ENCODE measurements at regions of chr14 and their contacts with region 1.

Region 1: DNA sequence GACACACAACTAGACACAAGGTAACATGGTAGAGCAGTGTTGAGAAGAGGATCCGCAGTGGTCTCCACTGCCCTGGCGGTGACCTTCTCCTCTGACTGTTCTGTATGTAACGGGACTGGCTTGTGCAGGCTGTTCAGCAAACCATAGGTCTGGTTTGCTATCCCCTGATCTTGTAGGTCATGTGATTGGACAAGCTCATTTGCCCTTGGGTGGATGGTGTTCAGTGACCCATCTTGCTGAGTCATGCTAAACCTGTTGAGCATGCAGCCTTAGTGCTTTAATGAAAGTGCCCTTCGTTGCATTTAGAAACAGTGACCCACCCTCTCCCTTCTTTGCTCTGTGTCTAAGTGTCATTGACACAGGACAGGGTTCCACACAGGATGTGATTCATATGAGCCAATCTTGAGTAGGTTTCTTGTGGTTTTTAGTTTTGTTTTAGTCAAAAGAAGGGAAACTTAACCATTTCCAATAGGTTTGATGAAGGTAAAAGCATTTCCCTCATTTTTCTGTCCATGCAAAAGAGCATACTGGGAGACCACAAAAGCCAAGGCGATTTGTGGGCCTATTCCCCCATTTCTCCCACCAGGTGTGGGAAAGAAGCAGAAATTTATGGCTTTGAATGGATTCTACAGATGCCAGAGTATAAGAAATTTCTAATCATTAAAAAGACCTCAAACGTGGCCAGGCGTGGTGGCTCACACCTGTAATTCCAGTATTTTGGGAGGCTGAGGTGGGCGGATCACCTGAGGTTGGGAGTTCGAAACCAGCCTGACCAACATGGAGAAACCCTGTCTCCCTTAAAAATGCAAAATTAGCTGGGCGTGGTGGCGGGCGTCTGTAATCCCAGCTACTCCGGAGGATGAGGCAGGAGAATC is 32.6 kb upstream of the HIF1A start:
- DNase-seq: peak; percentile 100
- ATAC-seq: peak; percentile 87
- H3K4me3 ChIP-seq: peak overlapping the region; percentile 50
- H3K27ac ChIP-seq: peak overlapping the region; percentile 79
- H3K4me1 ChIP-seq: peaks cover 34% of the 10 kb centered on the region
- H3K27me3 ChIP-seq: no peaks in the 10 kb centered on the region
- CTCF ChIP-seq: 0 out of 6 replicates have a peak, but pooled peaks of 1 of the 3 experiments have one; percentile 13
- EP300 ChIP-seq: peak; percentile 73 to 93; a peak in 3 of 4 replicates
- POLR2A ChIP-seq: peak; percentile 82
- RAD21 ChIP-seq: peak; percentile 29; the same call in 1 of the 2 replicates

Region 2: DNA sequence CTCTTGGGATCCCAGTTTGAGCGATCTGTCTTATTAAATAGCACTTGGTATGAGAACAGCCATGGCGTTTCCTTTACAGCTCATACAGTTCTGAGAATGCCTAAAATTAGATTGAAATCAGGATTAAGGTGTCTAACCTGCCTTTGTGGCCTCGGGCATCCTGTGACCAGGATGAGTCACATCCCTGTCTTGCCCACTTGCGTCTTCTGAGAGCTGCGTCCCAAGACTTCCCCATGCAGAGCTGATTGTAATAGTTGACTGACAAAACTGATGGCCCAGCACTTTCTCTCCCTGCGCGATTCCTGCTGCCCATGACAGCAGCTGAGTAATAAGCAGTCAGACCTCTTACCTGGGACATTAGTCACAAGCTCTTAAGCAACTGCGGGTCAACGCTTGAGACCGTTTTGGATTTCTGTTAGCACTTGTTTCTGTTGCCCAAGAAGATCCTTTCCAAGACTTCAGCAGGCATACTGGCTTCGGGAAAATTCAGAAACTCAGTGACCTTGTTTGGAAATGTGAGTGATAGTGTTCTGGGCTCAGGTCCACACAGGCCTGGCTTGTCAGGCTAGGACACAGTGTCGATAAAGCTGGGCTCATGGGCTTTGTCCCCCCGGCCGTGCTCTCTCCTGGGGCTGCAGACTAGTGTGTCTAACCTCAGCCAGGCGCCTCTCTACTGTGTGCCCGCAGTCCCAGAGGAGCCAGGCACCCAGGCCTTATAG is 137.2 kb before region 1 on chr14:
- CTCF ChIA-PET with region 1: no interaction called
- POLR2A ChIA-PET with region 1: no interaction called
- RAD21 ChIA-PET with region 1: interaction called, 12 read pairs
- SMC1A ChIA-PET with region 1: interaction called, 18 read pairs
- in situ Hi-C with region 1: no loop called
- intact Hi-C with region 1: loop called (anchors 2 kb)
- DNase-seq: peak; percentile 85
- ATAC-seq: peak; percentile 88
- H3K4me3 ChIP-seq: peak overlapping the region; percentile 34; the same call in 1 of the 2 replicates
- H3K27ac ChIP-seq: peak overlapping the region; percentile 60
- H3K4me1 ChIP-seq: peaks cover 15% of the 10 kb centered on the region
- H3K27me3 ChIP-seq: no peaks in the 10 kb centered on the region
- CTCF ChIP-seq: no peak
- EP300 ChIP-seq: peak; percentile 35 to 56; a peak in 2 of 4 replicates
- POLR2A ChIP-seq: no peak
- RAD21 ChIP-seq: no peak

Region 3: DNA sequence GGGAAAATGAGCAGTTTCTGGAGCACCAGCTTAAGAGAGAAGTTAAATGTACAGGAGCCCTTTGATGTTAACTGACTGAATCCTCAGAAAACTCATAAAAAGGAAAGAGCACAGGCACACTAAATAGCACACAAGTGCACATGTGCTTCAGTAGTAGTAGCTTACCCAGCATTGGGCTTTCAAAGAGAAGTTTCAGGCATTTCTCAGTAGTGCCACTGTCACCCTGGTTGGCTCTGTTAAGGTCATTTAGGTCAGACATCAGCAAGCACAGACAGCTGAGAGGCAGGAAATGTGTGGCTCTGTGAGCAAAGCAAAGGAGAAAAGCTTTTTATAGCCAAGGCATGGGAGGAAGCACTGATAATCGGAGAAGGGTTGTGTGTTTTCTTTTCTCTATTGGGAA is 63.7 kb before region 1 on chr14:
- CTCF ChIA-PET with region 1: no interaction called
- POLR2A ChIA-PET with region 1: interaction called, 4 read pairs
- RAD21 ChIA-PET with region 1: interaction called, 6 read pairs
- SMC1A ChIA-PET with region 1: interaction called, 5 read pairs
- in situ Hi-C with region 1: no loop called
- intact Hi-C with region 1: loop called (anchors 1 kb)
- DNase-seq: no peak
- ATAC-seq: peak; percentile 49
- H3K4me3 ChIP-seq: no peak overlapping the region
- H3K27ac ChIP-seq: no peak overlapping the region
- H3K4me1 ChIP-seq: peaks cover 15% of the 10 kb centered on the region
- H3K27me3 ChIP-seq: no peaks in the 10 kb centered on the region
- CTCF ChIP-seq: no peak
- EP300 ChIP-seq: no peak
- POLR2A ChIP-seq: no peak
- RAD21 ChIP-seq: no peak

Region 4: GRCh38 chr14:61719344-61720293 is 56.9 kb after region 1 on chr14:
- CTCF ChIA-PET with region 1: interaction called, 3 read pairs
- POLR2A ChIA-PET with region 1: no interaction called
- RAD21 ChIA-PET with region 1: interaction called, 4 read pairs
- SMC1A ChIA-PET with region 1: interaction called, 10 read pairs
- in situ Hi-C with region 1: no loop called
- intact Hi-C with region 1: no loop called
- DNase-seq: no peak
- ATAC-seq: peak; percentile 48
- H3K4me3 ChIP-seq: no peak overlapping the region; the same call in 1 of the 2 replicates
- H3K27ac ChIP-seq: peak overlapping the region; percentile 15; the same call in 1 of the 2 replicates
- H3K4me1 ChIP-seq: peaks cover 20% of the 10 kb centered on the region
- H3K27me3 ChIP-seq: no peaks in the 10 kb centered on the region
- CTCF ChIP-seq: no peak
- EP300 ChIP-seq: no peak
- POLR2A ChIP-seq: no peak
- RAD21 ChIP-seq: no peak

Measured in GM12878 (cell line).